Activated naive CD4-positive, alpha-beta T cell treated with anti-CD3 and anti-CD28 coated beads for 36 hours (primary cell): ENCODE measurements at regions of chr14 and their contacts with region 1.

Region 1: DNA sequence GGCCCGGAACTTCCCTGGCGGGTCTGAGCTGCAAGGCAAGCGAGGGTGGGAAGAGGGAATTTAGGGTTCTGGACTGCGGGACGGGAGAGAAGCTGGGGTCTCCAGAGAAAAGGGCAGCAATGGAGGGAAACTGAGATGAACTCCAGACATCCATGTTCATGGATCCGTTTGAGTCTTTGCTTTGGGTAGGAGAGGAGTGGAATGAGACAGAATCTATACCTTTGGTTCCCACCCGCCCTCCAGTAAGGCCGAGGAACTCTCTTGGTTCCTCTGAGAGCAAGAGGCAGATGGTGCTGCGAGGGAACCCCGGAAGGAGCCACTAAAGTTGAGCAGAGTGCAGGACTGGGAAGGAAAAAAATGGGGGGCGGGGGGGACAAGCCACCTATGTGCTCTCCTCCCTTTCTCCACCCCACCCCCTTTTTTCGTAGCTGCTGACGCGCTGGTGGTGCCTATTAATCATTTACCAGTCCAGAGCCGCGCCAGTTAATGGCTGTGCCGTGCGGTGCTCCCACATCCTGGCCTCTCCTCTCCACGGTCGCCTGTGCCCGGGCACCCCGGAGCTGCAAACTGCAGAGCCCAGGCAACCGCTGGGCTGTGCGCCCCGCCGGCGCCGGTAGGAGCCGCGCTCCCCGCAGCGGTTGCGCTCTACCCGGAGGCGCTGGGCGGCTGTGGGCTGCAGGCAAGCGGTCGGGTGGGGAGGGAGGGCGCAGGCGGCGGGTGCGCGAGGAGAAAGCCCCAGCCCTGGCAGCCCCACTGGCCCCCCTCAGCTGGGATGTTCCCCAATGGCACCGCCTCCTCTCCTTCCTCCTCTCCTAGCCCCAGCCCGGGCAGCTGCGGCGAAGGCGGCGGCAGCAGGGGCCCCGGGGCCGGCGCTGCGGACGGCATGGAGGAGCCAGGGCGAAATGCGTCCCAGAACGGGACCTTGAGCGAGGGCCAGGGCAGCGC is 1.2 kb downstream of the SSTR1 start:
- DNase-seq: peak; percentile 35
- H3K4me3 Mint-ChIP-seq: peak overlapping the region; percentile 41
- H3K27ac Mint-ChIP-seq: no peak overlapping the region
- H3K4me1 Mint-ChIP-seq: peaks cover 29% of the 10 kb centered on the region
- H3K27me3 Mint-ChIP-seq: peaks cover 67% of the 10 kb centered on the region

Region 2: GRCh38 chr14:37526992-37527771 is 681.7 kb before region 1 on chr14:
- CTCF ChIA-PET with region 1: no interaction called
- intact Hi-C with region 1: no loop called
- DNase-seq: no peak
- H3K4me3 Mint-ChIP-seq: no peak overlapping the region
- H3K27ac Mint-ChIP-seq: no peak overlapping the region
- H3K4me1 Mint-ChIP-seq: no peaks in the 10 kb centered on the region
- H3K27me3 Mint-ChIP-seq: peaks cover 3% of the 10 kb centered on the region

Region 3: GRCh38 chr14:37587881-37588666 is 620.8 kb before region 1 on chr14:
- CTCF ChIA-PET with region 1: no interaction called
- intact Hi-C with region 1: loop called (anchors 5 kb)
- DNase-seq: no peak
- H3K4me3 Mint-ChIP-seq: no peak overlapping the region
- H3K27ac Mint-ChIP-seq: no peak overlapping the region
- H3K4me1 Mint-ChIP-seq: peaks cover 4% of the 10 kb centered on the region
- H3K27me3 Mint-ChIP-seq: peaks cover 70% of the 10 kb centered on the region

Region 4: DNA sequence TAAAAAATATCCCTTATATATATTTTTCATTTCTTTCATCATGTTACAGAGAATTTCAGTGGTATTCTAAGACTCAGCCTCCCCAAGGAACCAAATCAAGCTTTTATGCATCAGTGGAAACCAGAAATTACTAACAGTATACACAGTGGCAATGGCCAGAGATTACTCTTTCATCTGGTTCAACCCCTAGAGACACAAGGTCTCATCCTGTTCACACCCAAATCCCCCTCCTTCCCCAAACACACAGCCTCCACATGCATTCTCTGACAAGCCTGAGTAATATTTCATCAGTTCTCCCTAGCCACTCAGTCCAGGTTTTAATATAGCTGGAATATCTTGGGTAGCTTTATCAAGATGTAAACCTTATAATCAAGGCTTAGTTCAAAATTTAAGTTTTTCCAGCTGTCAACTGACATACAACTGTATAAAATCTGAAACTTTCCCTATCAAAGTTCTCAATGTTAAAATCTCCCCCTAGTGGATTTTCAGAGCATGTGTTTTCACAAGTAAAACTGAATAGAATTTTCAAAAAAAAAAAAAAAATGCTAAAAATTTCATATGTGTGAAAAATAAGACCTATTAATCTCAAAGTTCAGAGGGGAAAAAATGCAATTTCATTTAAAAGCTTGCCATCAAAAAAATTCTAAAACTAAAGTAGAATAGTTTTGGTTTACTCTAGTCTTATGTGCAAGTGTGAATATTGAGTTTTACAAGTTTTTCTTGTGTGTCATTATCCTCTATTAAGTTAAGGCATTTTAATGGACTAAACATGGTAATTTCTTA is 11.7 kb before region 1 on chr14:
- CTCF ChIA-PET with region 1: interaction called, 13 read pairs
- intact Hi-C with region 1: no loop called
- DNase-seq: no peak
- H3K4me3 Mint-ChIP-seq: no peak overlapping the region
- H3K27ac Mint-ChIP-seq: no peak overlapping the region
- H3K4me1 Mint-ChIP-seq: peaks cover 5% of the 10 kb centered on the region
- H3K27me3 Mint-ChIP-seq: no peaks in the 10 kb centered on the region

Region 5: DNA sequence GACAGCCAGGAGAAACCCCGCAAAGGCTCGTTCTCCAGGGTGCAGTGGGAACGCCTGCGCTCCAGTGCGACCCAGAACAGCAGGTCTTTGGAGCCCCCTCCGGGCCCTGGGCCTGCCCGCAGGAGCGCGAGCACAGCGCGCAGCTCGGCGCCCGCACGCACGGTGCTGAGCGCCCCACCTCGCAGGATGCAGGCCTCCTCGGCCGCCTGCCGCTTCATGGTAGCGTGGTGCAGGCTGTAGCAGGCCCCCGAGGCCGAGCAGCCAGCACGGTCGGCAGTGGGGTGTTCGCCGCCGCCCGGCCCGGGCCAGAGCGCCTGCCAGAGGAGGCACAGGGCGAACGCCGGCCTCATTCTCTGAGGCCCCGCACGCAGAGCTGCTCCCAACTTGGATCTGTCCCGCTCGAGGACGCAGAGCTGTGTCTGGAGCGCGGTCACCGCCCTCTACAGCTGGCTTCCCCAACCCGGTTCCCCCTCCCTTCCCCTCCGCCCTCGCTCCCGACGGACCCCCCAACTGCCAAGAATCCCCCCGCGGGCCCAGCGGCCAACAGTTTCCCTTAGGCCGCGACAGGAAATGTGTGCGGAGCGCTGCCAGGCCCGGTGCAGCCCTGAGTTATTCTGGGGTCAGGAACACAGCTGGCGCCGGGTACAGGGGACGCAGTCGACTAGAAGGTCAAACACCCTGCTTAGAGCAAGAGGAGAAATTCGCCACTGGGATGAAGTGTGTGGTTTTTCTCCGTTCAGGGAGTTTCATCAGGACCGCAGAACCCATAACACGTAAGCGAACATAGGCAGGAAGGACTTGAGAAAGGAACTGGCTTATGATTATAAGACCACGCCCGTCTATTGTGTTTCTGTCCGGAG is 47.0 kb after region 1 on chr14 and contains the start of gene CLEC14A:
- CTCF ChIA-PET with region 1: interaction called, 3 read pairs
- intact Hi-C with region 1: loop called (anchors 2 kb)
- DNase-seq: peak; percentile 6
- H3K4me3 Mint-ChIP-seq: peak within 1 kb of the TSS; percentile 50
- H3K27ac Mint-ChIP-seq: no peak within 1 kb of the TSS
- H3K4me1 Mint-ChIP-seq: peaks cover 10% of the 10 kb centered on the region
- H3K27me3 Mint-ChIP-seq: peaks cover 48% of the 10 kb centered on the region
- total RNA-seq, gene CLEC14A: not detected

Region 6: DNA sequence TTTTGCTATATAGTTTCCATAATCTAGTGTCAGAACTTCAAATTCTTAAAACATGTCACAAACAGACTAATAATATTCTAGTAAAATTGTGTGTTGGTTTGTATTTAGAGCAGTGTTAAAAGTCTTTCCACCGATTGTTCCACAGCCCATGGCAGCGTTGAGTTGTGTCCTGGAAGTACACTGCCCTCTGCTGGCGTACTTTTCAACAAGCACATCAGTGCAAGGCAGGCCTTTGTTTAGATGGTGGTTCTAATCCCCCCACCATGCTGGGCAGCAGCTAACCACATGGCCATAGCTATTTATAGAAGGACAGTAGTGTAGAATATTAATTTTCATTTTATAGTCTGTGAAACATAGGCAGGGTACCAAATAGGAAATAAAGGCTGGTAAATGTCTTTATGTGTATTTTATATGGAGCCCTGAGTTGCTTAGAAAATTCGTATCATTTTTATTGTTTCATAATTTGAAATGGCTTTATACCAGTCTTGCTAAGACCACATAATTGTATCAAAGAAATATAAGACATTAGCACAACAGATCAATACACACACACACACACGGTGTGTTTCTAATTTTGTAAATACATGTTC is 658.8 kb after region 1 on chr14:
- CTCF ChIA-PET with region 1: interaction called, 3 read pairs
- intact Hi-C with region 1: loop called (anchors 5 kb)
- DNase-seq: peak; percentile 80
- H3K4me3 Mint-ChIP-seq: no peak overlapping the region
- H3K27ac Mint-ChIP-seq: no peak overlapping the region
- H3K4me1 Mint-ChIP-seq: no peaks in the 10 kb centered on the region
- H3K27me3 Mint-ChIP-seq: peaks cover 5% of the 10 kb centered on the region